PC-9 (cell line): ENCODE measurements at regions of chr11 and their contacts with region 1.

Region 1: GRCh38 chr11:65169164-65169641 is 830 bp upstream of the SPDYC start:
- DNase-seq: no peak
- H3K4me3 ChIP-seq: no peak overlapping the region
- H3K27ac ChIP-seq: no peak overlapping the region
- H3K4me1 ChIP-seq: no peaks in the 10 kb centered on the region; the same call in 1 of the 2 replicates
- H3K27me3 ChIP-seq: no peaks in the 10 kb centered on the region
- CTCF ChIP-seq: no peak

Region 2: GRCh38 chr11:64998101-64998500 is 171.1 kb before region 1 on chr11:
- CTCF ChIA-PET with region 1: no interaction called
- POLR2A ChIA-PET with region 1: interaction called, 15 read pairs
- intact Hi-C with region 1: no loop called
- DNase-seq: peak; percentile 41 to 60
- H3K4me3 ChIP-seq: no peak overlapping the region
- H3K27ac ChIP-seq: no peak overlapping the region
- H3K4me1 ChIP-seq: no peaks in the 10 kb centered on the region
- H3K27me3 ChIP-seq: no peaks in the 10 kb centered on the region
- CTCF ChIP-seq: no peak

Region 3: DNA sequence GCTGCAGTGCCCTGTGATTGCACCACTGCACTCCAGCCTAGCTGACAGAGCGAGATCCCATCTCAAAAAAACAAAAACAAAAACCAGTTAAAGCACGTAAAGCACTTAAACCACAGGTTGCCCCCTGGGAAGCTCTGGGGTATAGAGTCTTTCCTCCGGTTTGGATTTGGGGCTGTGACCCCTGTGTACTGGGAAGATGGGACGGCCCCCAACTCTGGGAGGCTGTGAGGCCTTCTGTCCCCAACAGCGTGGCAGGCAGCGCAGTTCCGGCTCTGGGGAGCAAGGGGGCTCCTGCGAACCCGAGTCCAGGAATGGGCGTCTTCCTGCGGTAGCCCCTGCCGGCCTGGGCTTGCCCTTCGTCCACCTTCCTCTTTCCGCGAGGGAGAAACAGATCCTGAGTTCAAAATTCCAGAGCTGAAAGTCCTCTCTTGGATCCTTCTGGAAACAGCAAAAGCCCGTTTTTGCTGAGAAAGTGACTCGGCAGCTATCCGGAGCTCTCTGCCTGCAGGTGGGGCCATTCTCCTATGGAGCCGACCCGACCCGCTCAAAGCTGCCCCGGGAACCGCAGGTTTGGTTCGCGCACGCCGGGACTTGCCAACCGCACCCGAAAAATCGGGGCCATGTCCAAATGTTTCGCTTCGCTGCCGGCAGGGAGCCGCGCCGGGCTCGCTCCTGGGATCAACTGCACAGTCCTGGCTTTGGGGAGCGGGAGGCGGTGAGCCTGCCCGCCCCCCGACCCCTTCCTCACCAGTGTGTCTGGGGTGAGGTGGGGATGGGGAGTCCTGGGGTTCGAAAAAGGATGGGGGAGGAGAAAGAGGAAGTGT is 56.3 kb after region 1 on chr11:
- CTCF ChIA-PET with region 1: no interaction called
- POLR2A ChIA-PET with region 1: no interaction called
- intact Hi-C with region 1: no loop called
- DNase-seq: no peak
- H3K4me3 ChIP-seq: no peak overlapping the region
- H3K27ac ChIP-seq: no peak overlapping the region
- H3K4me1 ChIP-seq: peaks cover 12% of the 10 kb centered on the region
- H3K27me3 ChIP-seq: no peaks in the 10 kb centered on the region
- CTCF ChIP-seq: no peak

Region 4: GRCh38 chr11:65243773-65244172 is 74.6 kb after region 1 on chr11:
- CTCF ChIA-PET with region 1: no interaction called
- POLR2A ChIA-PET with region 1: no interaction called
- intact Hi-C with region 1: no loop called
- DNase-seq: no peak
- H3K4me3 ChIP-seq: no peak overlapping the region
- H3K27ac ChIP-seq: no peak overlapping the region
- H3K4me1 ChIP-seq: no peaks in the 10 kb centered on the region
- H3K27me3 ChIP-seq: no peaks in the 10 kb centered on the region
- CTCF ChIP-seq: no peak